RWPE1 (cell line): ENCODE measurements at regions of chr1 and their contacts with region 1.

Region 1: GRCh38 chr1:150820710-150821512 is 12.9 kb upstream of the CTSK start:
- DNase-seq: peak; percentile 34
- H3K27ac ChIP-seq: peak overlapping the region; percentile 43; the same call in 1 of the 2 replicates
- CTCF ChIP-seq: no peak

Region 2: GRCh38 chr1:150925816-150926741 is 105.2 kb after region 1 on chr1 and contains the start of gene SETDB1:
- CTCF ChIA-PET with region 1: interaction called, 3 read pairs
- POLR2A ChIA-PET with region 1: interaction called, 18 read pairs
- DNase-seq: peak; percentile 92
- H3K27ac ChIP-seq: peak within 1 kb of the TSS; percentile 89
- CTCF ChIP-seq: no peak

Region 3: DNA sequence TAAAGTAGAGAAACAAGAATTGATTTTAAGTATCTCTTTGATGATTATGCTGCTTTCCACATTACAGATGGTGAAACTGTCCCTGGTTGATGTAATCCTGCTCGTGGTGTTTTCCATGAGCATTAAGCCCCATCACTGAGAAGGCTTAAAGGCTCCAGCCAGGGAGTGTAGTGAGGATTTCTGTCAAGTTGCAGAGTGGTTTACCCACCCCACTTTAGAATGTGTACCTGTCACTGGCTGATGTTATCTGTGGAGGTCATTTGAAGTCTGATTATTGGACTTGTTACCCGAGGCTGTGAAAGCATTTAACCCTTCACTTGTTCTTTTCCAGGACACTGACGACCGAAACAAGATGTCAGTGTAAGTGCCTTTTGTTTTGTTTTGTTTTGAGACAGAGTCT is 140.9 kb after region 1 on chr1:
- CTCF ChIA-PET with region 1: no interaction called
- POLR2A ChIA-PET with region 1: no interaction called
- DNase-seq: no peak
- H3K27ac ChIP-seq: peak overlapping the region; percentile 36; the same call in 1 of the 2 replicates
- CTCF ChIP-seq: no peak